RWPE1 (cell line): ENCODE measurements at regions of chr22 and their contacts with region 1.

Region 1: GRCh38 chr22:41403532-41404318 is 22.0 kb downstream of the TEF start:
- DNase-seq: peak; percentile 90
- H3K27ac ChIP-seq: peak overlapping the region; percentile 74
- CTCF ChIP-seq: peak; percentile 96

Region 2: GRCh38 chr22:41369424-41369745 is 34.3 kb before region 1 on chr22:
- CTCF ChIA-PET with region 1: no interaction called
- POLR2A ChIA-PET with region 1: no interaction called
- DNase-seq: no peak
- H3K27ac ChIP-seq: peak overlapping the region; percentile 12; the same call in 1 of the 2 replicates
- CTCF ChIP-seq: no peak

Region 3: DNA sequence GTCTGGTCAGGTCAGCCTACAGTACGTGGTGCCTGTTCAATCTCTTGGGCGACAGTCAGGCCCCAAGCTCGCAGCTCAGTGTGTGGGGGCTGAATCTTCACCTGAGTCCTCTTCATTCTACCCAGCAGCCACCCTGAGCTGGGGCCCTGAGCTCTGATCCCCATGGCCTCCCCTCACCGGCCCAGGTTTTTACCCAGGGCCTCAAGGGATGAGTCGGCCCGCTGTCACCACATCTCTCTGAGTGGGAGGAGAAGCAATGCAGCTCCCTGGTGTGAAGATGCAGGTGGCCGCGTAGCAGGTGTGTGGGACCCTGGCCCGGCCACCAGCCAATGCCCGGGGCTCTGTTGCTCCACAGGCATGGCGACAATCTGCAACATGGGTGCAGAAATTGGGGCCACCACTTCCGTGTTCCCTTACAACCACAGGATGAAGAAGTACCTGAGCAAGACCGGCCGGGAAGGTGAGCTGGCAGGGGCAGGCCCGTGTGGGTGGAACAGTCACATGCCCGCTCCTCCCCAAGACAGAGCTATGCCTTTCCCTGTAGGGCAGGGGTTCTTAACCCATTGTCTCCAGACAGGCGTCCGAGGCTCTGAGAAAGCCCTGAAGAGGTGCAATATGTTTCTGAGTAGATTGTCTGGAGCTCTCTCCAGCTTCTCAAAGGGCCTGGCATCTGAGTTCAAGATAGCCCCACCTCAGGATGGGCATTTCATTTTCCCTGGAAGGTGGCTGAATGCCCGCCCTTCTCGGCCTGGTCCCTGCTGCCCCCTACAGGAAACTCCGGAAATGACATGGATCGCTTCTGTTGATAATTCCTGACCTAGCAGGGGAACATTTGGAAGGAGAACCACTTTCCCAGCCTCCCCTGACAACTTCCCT is 113.7 kb after region 1 on chr22:
- CTCF ChIA-PET with region 1: interaction called, 22 read pairs
- POLR2A ChIA-PET with region 1: no interaction called
- DNase-seq: peak; percentile 52
- H3K27ac ChIP-seq: peak overlapping the region; percentile 79
- CTCF ChIP-seq: peak; percentile 86

Region 4: DNA sequence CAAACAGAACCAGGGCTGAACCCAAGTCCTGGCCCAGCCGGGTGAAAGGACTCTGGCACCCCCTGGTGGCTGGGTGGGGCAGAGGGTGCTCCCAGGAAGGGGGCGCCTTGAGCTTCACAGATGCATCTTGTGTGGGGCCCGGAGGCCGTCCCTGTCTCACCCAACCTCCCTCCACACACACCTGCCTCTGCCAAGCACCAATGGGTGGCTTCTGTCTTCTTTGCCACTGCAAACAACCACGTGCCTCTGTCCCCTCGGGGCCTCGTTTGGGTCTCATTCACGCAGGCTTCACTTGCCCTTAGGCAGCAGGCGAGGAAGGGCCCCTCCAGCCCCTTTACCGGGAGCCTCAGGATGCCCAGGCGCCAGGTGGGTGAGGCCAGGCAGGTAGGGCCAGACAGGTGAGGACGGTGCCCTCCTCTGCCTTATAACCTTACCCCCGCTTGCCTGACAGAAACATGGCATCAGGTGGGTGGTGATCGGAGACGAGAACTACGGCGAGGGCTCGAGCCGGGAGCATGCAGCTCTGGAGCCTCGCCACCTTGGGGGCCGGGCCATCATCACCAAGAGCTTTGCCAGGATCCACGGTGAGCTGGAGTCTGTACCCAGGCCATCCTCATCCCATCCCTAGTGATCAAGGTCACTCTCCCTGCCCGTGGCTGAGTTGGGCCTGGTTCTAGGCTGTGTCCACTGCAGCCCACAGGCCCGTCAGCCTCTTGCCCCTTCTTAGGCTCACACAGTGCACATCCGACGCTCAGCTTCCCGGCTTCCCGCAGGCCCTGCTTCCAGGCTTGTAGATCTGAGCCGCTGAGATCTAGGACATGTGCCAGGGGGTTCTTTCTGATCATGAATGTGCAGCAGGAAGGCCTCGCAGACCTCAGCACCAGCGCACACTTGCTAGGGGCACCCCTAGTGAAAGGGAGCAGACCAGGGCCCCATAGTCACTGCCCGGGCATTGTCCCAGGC is 123.4 kb after region 1 on chr22:
- CTCF ChIA-PET with region 1: interaction called, 13 read pairs
- POLR2A ChIA-PET with region 1: no interaction called
- DNase-seq: peak; percentile 47
- H3K27ac ChIP-seq: peak overlapping the region; percentile 61
- CTCF ChIP-seq: peak; percentile 79

Region 5: DNA sequence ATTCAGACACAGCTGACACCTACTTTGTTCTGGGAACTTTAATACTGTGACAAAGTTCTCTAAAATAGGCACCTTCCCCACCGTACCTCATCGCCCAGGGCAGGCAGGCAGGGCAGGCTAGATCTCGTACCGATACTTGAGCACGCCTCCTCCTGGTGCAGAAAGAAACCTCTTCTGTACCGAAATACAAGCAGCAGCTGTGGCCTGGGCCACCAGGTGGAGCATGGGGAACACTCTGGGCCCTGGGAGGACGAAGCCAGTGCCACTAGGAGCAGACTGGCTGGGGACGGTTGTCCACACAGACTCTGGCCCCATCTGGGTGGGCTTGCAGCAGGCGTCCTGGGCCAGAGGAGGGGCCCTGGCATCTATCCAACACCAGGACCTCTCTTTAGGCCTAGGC is 173.2 kb after region 1 on chr22:
- CTCF ChIA-PET with region 1: no interaction called
- POLR2A ChIA-PET with region 1: no interaction called
- DNase-seq: peak; percentile 31
- H3K27ac ChIP-seq: peak overlapping the region; percentile 15
- CTCF ChIP-seq: peak; percentile 62